Cardiac septum (tissue), 1 donor: ENCODE measurements at regions of chr18 and their contacts with region 1.

Region 1: DNA sequence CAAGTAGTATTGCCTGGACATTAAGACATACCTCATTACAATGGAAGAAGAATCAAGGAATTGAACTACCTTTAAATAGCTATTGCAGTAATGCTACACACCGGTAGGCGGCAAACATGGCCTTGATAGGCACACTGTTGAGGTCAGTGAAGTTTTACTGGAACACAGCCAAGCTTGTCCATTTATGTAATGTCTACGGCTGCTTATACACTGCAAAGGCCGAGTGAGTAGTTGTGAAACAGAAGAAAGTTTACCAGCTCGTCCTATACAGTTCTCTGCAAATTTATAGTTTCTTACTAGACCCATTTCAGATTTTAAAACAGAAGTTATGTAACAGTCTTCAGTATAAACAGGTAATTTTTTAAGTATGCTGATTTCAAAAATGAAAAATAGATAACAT is 38.8 kb downstream of the PPP4R1 start:
- DNase-seq: no peak

Region 2: DNA sequence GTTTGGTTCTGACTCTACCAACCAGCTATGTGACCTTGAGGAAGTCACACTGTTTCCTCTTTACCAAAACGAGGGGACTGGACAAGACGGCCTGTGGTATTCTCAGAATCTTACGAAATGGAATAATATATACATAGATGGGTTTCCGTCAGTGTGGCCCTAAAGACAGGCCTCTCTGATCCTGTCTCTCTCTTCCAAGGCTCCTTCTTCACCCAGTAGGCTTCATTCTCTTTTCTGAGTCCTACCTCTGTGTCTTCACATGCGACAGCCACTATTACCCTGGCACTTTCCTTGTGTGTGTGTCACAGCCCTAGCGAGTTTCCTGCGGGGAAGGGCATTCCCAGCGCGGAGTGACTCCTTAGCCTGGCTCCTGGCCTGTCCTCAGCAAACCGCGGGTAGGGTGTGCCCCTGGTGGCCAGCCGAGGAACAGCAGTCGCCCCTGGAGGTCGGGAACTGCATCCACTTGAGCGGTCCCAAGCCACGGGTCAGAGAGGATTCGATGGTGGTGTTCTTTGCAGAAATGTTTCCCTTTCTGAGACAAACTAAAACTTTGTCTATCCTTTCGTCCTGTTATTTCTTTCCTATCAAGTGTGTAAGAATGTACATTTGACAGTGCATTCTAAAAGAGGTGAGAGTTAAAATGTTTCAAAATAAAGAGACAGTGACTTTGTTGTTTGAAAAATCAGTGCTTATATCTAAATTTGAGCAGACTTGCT is 195.9 kb after region 1 on chr18:
- intact Hi-C with region 1: loop called (anchors 5 kb)
- DNase-seq: peak; percentile 93

Region 3: GRCh38 chr18:9951022-9951859 is 375.7 kb after region 1 on chr18:
- intact Hi-C with region 1: loop called (anchors 10 kb)
- DNase-seq: no peak